ENCODE measurements at regions of chr11 and their contacts with region 1.

Region 1: DNA sequence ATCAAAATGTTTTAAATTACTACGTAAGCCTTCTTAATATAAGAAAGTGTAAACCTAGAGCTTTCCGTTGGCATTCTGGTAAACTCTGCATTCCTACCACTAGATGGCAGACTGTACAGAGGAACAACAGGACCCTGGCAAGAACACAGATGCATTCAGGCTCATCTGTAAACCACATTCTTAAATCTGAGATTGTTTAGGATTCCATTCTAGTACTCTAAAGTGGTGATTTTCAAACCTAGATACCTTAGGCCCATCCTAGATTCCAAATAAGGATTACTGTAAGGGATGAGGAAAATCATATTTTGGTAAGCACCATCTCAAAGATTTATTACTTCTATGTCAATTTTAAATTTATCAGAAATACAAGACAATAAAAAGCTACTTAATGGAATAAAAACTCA is 26.9 kb downstream of the PICALM start:
- DNase-seq: peak; percentile 70 to 86 (median 75)
- ATAC-seq: peak; percentile 63
- H3K4me3 ChIP-seq: no peak overlapping the region
- H3K27ac ChIP-seq: peak overlapping the region; percentile 45; the same call in 1 of the 3 replicates
- H3K4me1 ChIP-seq: peaks cover 6 to 37% of the 10 kb centered on the region in 2 experiments; a peak in 4 of 5 replicates
- H3K27me3 ChIP-seq: no peaks in the 10 kb centered on the region
- CTCF ChIP-seq: peak; percentile 69 to 89 (median 78)
- EP300 ChIP-seq: no peak
- POLR2A ChIP-seq: no peak
- RAD21 ChIP-seq: peak; percentile 80 to 84

Region 2: DNA sequence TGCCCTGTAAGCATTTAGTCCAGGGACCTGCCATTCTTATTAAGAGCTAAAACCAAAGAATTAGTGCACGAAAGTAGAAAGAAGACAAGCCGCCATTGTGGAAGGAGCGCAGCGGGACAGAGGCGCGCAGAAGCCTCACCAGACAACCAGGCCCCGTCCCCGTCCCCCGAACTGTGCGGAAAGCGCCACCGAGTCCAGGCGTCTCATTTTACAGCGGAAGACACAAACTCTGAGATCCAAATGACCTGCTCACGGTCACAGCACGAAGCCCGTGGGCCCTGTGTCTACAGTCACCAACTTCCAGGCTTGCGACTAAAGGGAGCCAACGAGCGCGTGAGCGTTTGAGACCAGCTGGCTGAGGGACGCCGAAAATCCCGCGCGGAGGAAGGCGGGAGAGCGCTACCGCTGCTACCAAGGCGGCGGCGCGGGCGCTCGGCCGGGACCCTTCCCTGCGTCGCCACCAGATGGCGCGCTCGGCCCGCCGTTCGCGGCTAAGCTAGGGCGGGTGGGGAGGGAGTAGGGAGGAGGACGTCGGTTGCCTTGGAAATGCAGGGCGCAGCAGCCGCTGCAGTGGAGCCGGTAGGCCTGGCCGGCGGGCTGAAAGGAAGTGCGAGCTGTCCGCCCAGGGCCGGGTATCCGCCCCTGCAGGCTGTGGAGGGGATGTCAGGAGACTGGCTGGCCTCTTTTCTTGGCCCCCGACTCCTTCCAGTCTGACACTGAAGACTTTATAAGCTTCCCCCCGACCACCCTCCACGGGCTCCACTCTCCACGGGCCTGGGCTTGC is 187.2 kb before region 1 on chr11:
- CTCF ChIA-PET with region 1: no interaction called
- POLR2A ChIA-PET with region 1: no interaction called
- in situ Hi-C with region 1: no loop called
- intact Hi-C with region 1: loop called (anchors 10 kb)
- DNase-seq: peak; percentile 90 to 94 (median 92)
- ATAC-seq: peak; percentile 99
- H3K4me3 ChIP-seq: peak overlapping the region; percentile 33
- H3K27ac ChIP-seq: peak overlapping the region; percentile 56
- H3K4me1 ChIP-seq: peaks cover 4 to 11% of the 10 kb centered on the region in 2 experiments; a peak in 2 of 5 replicates
- H3K27me3 ChIP-seq: no peaks in the 10 kb centered on the region
- CTCF ChIP-seq: peak; percentile 85 to 93 (median 88)
- EP300 ChIP-seq: no peak
- POLR2A ChIP-seq: peak; percentile 76
- RAD21 ChIP-seq: peak; percentile 91 to 97

Region 3: GRCh38 chr11:85922367-85922766 is 119.6 kb before region 1 on chr11:
- CTCF ChIA-PET with region 1: no interaction called
- POLR2A ChIA-PET with region 1: no interaction called
- in situ Hi-C with region 1: no loop called
- intact Hi-C with region 1: no loop called
- DNase-seq: no peak
- ATAC-seq: no peak
- H3K4me3 ChIP-seq: no peak overlapping the region
- H3K27ac ChIP-seq: no peak overlapping the region
- H3K4me1 ChIP-seq: no peaks in the 10 kb centered on the region
- H3K27me3 ChIP-seq: peaks cover 15 to 23% of the 10 kb centered on the region in 2 experiments; a peak in 4 of 5 replicates
- CTCF ChIP-seq: no peak
- EP300 ChIP-seq: no peak
- POLR2A ChIP-seq: no peak
- RAD21 ChIP-seq: no peak

Region 4: DNA sequence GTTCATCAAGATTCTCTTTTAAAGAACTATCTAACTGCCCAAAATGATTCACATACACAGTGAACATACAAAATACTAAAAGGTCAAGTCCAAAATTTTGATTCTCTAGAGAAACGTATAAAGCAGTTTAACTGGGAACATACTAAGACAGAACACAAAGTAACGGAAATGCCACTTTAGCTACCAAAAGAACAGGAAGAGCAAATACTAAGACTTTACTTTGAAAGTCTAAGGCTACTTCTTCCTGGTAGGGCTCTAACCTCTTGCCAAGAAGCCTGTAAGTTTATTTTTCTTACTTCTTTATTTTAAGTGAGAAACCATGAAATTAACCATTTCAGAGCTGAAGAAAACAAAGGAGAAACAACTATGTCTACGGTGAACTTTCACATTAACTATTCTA is 20.7 kb after region 1 on chr11:
- CTCF ChIA-PET with region 1: no interaction called
- POLR2A ChIA-PET with region 1: interaction called, 4 read pairs
- in situ Hi-C with region 1: no loop called
- intact Hi-C with region 1: loop called (anchors 2 kb)
- DNase-seq: no peak
- ATAC-seq: peak; percentile 1; the same call in 2 of the 3 replicates
- H3K4me3 ChIP-seq: peak overlapping the region; percentile 64
- H3K27ac ChIP-seq: peak overlapping the region; percentile 90; the same call in 2 of the 3 replicates
- H3K4me1 ChIP-seq: peaks cover 18 to 37% of the 10 kb centered on the region in 2 experiments
- H3K27me3 ChIP-seq: no peaks in the 10 kb centered on the region
- CTCF ChIP-seq: no peak
- EP300 ChIP-seq: no peak
- POLR2A ChIP-seq: no peak
- RAD21 ChIP-seq: no peak

Region 5: DNA sequence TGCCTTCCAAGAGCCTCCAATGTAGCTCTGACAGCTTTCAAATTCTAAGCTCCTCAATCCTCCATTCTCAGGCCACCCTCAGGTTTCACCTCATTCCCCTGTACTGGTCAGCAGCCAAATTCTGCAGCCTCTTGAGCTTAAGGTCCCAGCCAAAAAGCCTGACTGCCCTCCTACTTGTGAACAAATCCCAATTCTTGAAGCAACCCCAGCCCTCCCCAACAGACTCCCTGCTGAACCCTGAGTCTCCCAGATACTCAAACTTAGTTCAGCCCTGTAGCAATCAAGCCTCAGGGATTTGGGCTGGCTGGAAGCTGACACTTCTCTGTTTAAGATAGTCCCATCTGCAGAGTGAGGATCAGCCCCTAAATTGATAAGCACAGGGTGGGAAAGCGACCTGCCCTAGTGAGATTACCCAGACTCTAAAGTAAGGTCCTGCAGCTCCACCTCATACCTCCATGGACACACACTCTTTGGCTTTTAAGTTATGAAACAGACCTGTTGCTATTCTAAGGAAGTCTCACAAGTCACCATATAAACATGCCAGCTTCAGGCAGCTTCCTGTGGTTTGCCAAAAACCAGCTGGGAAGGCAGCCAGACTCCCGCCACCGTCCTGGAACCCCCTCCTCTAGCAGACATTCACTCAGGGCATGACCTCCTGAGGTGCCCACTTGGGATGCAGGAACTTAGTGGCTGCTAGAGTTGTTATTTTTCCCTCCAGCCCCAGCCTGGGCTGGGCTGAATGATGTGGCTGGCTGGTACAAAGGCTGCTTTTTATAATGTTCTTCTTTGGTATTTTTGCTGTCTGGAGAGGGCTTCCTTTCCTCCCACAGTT is 109.4 kb after region 1 on chr11:
- CTCF ChIA-PET with region 1: interaction called, 4 read pairs
- POLR2A ChIA-PET with region 1: interaction called, 3 read pairs
- in situ Hi-C with region 1: no loop called
- intact Hi-C with region 1: loop called (anchors 1 kb)
- DNase-seq: peak; percentile 76 to 96 (median 86)
- ATAC-seq: peak; percentile 79
- H3K4me3 ChIP-seq: no peak overlapping the region; the same call in 1 of the 2 replicates
- H3K27ac ChIP-seq: peak overlapping the region; percentile 78
- H3K4me1 ChIP-seq: peaks cover 46 to 78% of the 10 kb centered on the region in 2 experiments
- H3K27me3 ChIP-seq: no peaks in the 10 kb centered on the region; a peak in 1 of 5 replicates
- CTCF ChIP-seq: peak in 2 of 3 experiments; percentile 7 to 24; a peak in 2 of 6 replicates
- EP300 ChIP-seq: peak; percentile 98
- POLR2A ChIP-seq: no peak
- RAD21 ChIP-seq: peak; percentile 17 to 56; a peak in 3 of 4 replicates

Region 6: GRCh38 chr11:86202013-86202336 is 160.0 kb after region 1 on chr11:
- CTCF ChIA-PET with region 1: interaction called, 4 read pairs
- POLR2A ChIA-PET with region 1: interaction called, 3 read pairs
- in situ Hi-C with region 1: loop called (anchors 5 kb)
- intact Hi-C with region 1: no loop called
- DNase-seq: peak in 1 of 4 experiments; percentile 55
- ATAC-seq: peak; percentile 66
- H3K4me3 ChIP-seq: peak overlapping the region; percentile 15
- H3K27ac ChIP-seq: peak overlapping the region; percentile 76
- H3K4me1 ChIP-seq: peaks cover 18 to 57% of the 10 kb centered on the region in 2 experiments
- H3K27me3 ChIP-seq: no peaks in the 10 kb centered on the region
- CTCF ChIP-seq: no peak
- EP300 ChIP-seq: no peak
- POLR2A ChIP-seq: no peak
- RAD21 ChIP-seq: no peak

Region 7: DNA sequence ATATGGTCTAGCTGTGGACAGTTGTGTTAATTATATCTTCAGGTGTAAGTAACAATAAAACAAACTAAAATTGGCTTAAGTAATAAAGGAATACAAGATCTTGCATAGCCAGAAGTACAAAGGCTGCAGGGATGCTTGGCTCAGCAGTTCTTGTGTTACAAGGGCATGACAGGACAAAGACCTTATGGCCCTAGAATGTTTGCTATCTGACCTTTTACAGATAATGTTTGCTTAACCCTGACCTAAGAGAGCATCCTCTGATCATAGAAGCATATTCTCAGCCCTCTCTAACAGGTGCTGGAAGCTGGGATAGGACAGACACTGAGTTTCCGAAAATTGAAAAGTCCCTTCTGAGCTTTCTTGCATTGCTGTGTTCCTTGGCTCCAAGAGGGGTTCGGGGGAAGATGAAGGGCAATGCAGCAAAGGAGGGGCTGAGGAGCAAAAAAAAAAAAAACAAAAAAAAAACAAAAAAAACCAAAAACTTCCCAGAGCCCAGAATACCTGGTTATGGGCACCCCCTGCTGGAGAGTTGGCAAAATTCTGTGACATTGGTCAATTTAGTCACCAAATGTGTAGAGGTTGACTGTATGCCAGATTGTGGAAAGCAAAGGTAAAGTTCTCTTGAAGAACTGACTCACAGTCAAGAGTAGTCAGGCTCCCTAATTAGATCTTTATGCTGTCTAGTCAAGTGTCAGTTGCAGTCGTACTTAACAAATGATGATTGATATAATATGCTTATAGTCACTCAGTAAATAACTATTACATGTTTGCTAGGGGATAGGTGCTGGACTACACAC is 249.7 kb after region 1 on chr11:
- CTCF ChIA-PET with region 1: interaction called, 6 read pairs
- POLR2A ChIA-PET with region 1: no interaction called
- in situ Hi-C with region 1: no loop called
- intact Hi-C with region 1: loop called (anchors 5 kb)
- DNase-seq: peak; percentile 57 to 76 (median 64)
- ATAC-seq: peak; percentile 80
- H3K4me3 ChIP-seq: no peak overlapping the region
- H3K27ac ChIP-seq: no peak overlapping the region
- H3K4me1 ChIP-seq: no peaks in the 10 kb centered on the region; a peak in 1 of 5 replicates
- H3K27me3 ChIP-seq: no peaks in the 10 kb centered on the region
- CTCF ChIP-seq: peak; percentile 70 to 88 (median 84)
- EP300 ChIP-seq: no peak
- POLR2A ChIP-seq: no peak
- RAD21 ChIP-seq: peak; percentile 78 to 83